ENCODE measurements at regions of chr2 and their contacts with region 1.

Region 1: DNA sequence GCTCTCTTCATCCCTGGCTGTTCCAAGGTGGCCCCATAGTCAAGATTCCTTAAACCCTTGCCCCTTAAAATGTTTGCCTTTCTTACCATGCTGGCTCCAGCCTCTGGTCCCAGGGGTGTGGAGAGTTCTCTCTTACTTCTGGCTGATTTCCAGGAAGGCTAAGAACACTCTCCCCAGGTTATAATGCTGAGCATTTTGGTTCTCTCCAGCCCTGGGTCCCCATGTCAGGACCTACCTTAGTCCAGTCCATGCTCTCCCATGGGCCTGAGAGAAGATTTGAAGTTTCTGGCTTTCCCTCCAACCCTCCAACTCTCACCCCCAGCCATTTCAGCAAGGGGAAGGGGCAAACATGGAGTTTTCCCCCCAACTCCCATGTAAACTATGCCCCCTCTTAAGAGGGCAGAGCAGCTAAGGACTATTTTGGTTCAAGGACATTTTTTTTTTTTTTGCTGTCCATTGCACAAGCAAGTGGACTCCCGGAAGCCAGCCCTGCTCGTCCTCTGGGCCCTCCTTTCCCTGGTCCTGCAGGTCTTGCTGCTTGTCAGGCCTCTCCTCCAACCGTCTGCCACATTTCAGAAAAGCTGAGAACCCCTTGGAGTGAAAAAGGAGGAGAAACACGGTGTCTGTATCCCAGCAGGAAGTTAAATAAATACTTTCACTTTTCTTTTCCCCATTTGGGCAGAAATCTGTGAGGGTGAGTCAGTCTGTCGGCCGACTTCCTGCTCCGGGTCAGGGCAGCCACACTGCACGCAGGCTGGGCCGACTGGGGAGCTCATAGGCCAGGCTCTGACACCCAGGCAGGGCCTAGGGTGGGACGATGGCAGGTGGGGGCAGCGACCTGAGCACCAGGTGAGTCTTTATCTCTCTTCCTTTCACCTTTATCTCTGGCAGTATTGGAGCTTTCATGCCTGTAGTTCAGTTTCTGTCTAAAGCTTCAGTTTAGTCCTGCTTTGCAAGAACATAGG is at the start of gene SP140L:
- DNase-seq: peak; percentile 86 to 92 (median 89)
- H3K4me3 ChIP-seq: peak within 1 kb of the TSS; percentile 49 to 72 (median 55)
- H3K4me3 Mint-ChIP-seq: peak within 1 kb of the TSS; percentile 80 to 95
- H3K27ac ChIP-seq: peak within 1 kb of the TSS; percentile 96 to 99
- H3K27ac Mint-ChIP-seq: peak within 1 kb of the TSS; percentile 98 to 100 (median 99)
- H3K4me1 ChIP-seq: peaks cover 44 to 69% of the 10 kb centered on the region in 2 donors
- H3K4me1 Mint-ChIP-seq: peaks cover 65% of the 10 kb centered on the region
- H3K27me3 ChIP-seq: no peaks in the 10 kb centered on the region
- H3K27me3 Mint-ChIP-seq: peaks cover 0 to 8% (median 2%) of the 10 kb centered on the region in 3 donors
- CTCF ChIP-seq: no peak
- polyA plus RNA-seq, gene SP140L: 6.5 to 23.7 (median 8.5) TPM

Region 2: GRCh38 chr2:229921892-229922445 is 404.8 kb before region 1 on chr2 and contains the start of gene TRIP12:
- intact Hi-C with region 1: loop called in 1 of 2 experiments (anchors 10 kb)
- DNase-seq: peak; percentile 83 to 92 (median 86)
- H3K4me3 ChIP-seq: peak within 1 kb of the TSS; percentile 39 to 99 (median 88)
- H3K4me3 Mint-ChIP-seq: peak within 1 kb of the TSS; percentile 99
- H3K27ac ChIP-seq: peak within 1 kb of the TSS; percentile 94 to 95
- H3K27ac Mint-ChIP-seq: peak within 1 kb of the TSS; percentile 96 to 99 (median 98)
- H3K4me1 ChIP-seq: peaks cover 18 to 30% of the 10 kb centered on the region in 2 donors
- H3K4me1 Mint-ChIP-seq: peaks cover 39% of the 10 kb centered on the region
- H3K27me3 ChIP-seq: no peaks in the 10 kb centered on the region
- H3K27me3 Mint-ChIP-seq: no peaks in the 10 kb centered on the region
- CTCF ChIP-seq: no peak
- polyA plus RNA-seq, gene TRIP12: 22.2 to 56.7 (median 44.0) TPM

Region 3: GRCh38 chr2:230130668-230131364 is 195.9 kb before region 1 on chr2:
- intact Hi-C with region 1: no loop called
- DNase-seq: no peak
- H3K4me3 ChIP-seq: no peak overlapping the region
- H3K4me3 Mint-ChIP-seq: no peak overlapping the region
- H3K27ac ChIP-seq: no peak overlapping the region
- H3K27ac Mint-ChIP-seq: no peak overlapping the region
- H3K4me1 ChIP-seq: peaks cover 20 to 46% of the 10 kb centered on the region in 2 donors
- H3K4me1 Mint-ChIP-seq: peaks cover 33% of the 10 kb centered on the region
- H3K27me3 ChIP-seq: no peaks in the 10 kb centered on the region
- H3K27me3 Mint-ChIP-seq: no peaks in the 10 kb centered on the region
- CTCF ChIP-seq: no peak

Region 4: GRCh38 chr2:230219419-230220331 is 107.1 kb before region 1 on chr2 and contains the start of gene SP110:
- intact Hi-C with region 1: loop called (anchors 5 kb)
- DNase-seq: peak; percentile 73 to 85 (median 78)
- H3K4me3 ChIP-seq: peak within 1 kb of the TSS; percentile 80 to 99 (median 96)
- H3K4me3 Mint-ChIP-seq: peak within 1 kb of the TSS; percentile 97 to 99
- H3K27ac ChIP-seq: peak within 1 kb of the TSS; percentile 75 to 94
- H3K27ac Mint-ChIP-seq: peak within 1 kb of the TSS; percentile 96 to 99 (median 97)
- H3K4me1 ChIP-seq: peaks cover 41 to 64% of the 10 kb centered on the region in 2 donors
- H3K4me1 Mint-ChIP-seq: peaks cover 52% of the 10 kb centered on the region
- H3K27me3 ChIP-seq: no peaks in the 10 kb centered on the region
- H3K27me3 Mint-ChIP-seq: no peaks in the 10 kb centered on the region
- CTCF ChIP-seq: no peak
- polyA plus RNA-seq, gene SP110: 39.1 to 66.1 (median 65.5) TPM

Measured in CD14-positive monocyte (primary cell).